Sigmoid colon (tissue), 7 donors: ENCODE measurements at regions of chr10 and their contacts with region 1.

Region 1: DNA sequence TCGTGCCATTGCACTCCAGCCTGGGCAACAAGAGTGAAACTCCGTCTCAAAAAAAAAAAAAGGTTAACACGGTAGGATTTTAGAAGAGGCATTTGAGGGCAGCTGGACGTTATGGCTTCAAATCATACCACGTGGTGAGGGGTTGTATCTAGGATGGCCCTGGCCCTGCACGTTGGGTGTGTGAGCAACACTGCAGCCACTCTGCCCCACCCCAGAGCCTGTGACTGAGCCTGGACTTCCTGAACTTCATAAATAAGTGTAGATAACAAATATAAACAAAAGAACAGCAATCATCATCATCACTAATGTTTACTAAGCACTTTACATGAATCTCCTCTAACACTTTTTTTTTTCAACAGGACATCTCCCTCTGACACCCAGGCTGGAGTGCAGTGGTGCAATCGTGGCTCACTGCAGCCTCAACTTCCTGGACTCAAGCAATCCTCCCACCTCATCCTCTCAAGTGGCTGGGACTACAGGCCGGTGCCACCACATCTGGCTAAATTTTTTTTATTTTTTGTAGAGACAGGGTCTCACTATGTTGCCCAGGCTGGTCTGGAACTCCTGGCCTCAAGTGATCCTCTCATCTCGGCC is 169.5 kb upstream of the FRMD4A start:
- DNase-seq: no peak
- H3K4me3 ChIP-seq: no peak overlapping the region
- H3K27ac ChIP-seq: no peak overlapping the region
- H3K4me1 ChIP-seq: peaks cover 0 to 6% (median 0%) of the 10 kb centered on the region in 4 donors
- H3K27me3 ChIP-seq: no peaks in the 10 kb centered on the region
- CTCF ChIP-seq: no peak
- EP300 ChIP-seq: no peak
- POLR2A ChIP-seq: no peak

Region 2: DNA sequence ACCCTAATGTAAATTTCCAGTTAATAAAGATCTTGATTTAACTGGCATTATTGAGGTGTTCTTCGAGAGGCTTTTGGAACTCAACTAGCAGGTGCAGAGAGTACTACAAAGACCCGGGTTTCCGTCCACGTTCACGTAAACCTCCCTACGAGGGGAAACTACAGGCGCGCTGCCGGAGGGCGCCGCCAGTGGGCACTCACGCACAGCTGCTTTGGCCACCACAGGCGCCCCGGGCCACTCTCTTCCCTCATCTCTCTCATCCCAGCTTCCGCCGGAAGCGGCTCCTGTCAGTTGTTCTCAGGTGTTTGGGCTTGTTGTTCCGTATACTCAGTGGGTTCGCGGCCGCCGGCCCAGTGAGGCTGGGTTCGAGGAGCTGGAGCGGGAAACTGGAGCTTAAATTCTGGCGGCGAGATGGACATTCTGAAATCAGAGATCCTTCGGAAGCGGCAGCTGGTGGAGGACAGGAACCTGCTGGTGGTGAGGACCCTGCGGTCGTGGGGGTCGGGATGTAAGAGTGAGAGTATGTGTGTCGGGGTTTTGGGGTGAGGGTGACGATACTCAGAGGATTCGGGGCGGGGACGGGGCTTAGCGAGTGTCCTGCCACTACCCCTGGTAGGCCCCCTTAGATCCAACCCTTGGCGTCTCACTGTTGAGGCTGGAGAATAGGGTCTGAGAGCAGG is 913.5 kb before region 1 on chr10 and contains the start of gene PRPF18:
- intact Hi-C with region 1: no loop called
- DNase-seq: peak; percentile 95
- H3K4me3 ChIP-seq: peak within 1 kb of the TSS; percentile 65 to 91 (median 76)
- H3K27ac ChIP-seq: peak within 1 kb of the TSS; percentile 60 to 78 (median 70)
- H3K4me1 ChIP-seq: peaks cover 0 to 20% (median 15%) of the 10 kb centered on the region in 4 donors
- H3K27me3 ChIP-seq: peaks cover 0 to 4% (median 0%) of the 10 kb centered on the region in 3 donors
- CTCF ChIP-seq: peak; percentile 91 to 95 (median 91)
- EP300 ChIP-seq: no peak
- POLR2A ChIP-seq: no peak
- total RNA-seq, gene PRPF18: 25.8 to 39.3 (median 29.0) TPM

Region 3: GRCh38 chr10:14822879-14823755 is 322.8 kb after region 1 on chr10:
- intact Hi-C with region 1: loop called (anchors 2 kb)
- DNase-seq: no peak
- H3K4me3 ChIP-seq: no peak overlapping the region
- H3K27ac ChIP-seq: no peak overlapping the region
- H3K4me1 ChIP-seq: peaks cover 0 to 6% (median 0%) of the 10 kb centered on the region in 4 donors
- H3K27me3 ChIP-seq: no peaks in the 10 kb centered on the region
- CTCF ChIP-seq: peak; percentile 17 to 60 (median 47)
- EP300 ChIP-seq: no peak
- POLR2A ChIP-seq: no peak

Region 4: DNA sequence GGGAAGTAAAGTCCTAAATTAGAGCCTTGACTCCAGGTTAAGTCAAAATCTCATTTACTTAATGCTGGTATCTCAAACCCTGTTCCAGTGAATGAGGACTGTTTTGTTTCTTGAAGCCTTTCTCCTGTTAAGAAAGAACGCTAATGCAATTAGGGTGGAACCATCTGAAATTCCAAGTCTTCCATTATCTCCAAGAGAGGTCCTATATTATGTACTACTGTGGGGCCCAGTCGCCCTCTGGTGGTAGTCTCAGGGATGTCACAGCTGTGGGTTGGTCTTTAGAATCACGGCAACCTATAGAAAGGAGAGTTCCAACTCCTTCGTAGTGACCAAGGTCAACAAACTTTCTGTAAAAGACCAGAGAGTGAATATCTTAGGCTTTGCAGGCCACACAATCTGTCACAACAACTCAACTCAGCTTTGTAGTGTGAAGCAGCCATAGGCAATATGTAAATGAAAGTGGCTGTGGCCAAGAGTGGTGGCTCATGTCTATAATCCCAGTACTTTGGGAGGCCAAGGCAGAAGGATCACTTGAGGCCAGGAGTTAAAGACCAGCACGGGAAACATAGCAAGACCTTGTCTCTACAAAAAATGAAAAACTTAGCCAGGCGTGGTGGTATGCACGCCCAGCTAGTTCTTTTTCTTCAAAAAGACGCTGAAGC is 606.2 kb after region 1 on chr10:
- intact Hi-C with region 1: loop called (anchors 5 kb)
- DNase-seq: no peak
- H3K4me3 ChIP-seq: no peak overlapping the region
- H3K27ac ChIP-seq: no peak overlapping the region
- H3K4me1 ChIP-seq: no peaks in the 10 kb centered on the region
- H3K27me3 ChIP-seq: no peaks in the 10 kb centered on the region
- CTCF ChIP-seq: peak; percentile 68 to 81 (median 75)
- EP300 ChIP-seq: no peak
- POLR2A ChIP-seq: no peak